Cardiac septum (tissue), 1 donor: ENCODE measurements at regions of chr3 and their contacts with region 1.

Region 1: GRCh38 chr3:130111185-130111864 is 29.7 kb downstream of the ALG1L2 start:
- DNase-seq: peak; percentile 100

Region 2: GRCh38 chr3:129530251-129530791 is 581.0 kb before region 1 on chr3:
- intact Hi-C with region 1: no loop called
- DNase-seq: no peak

Region 3: GRCh38 chr3:129942296-129942695 is 169.0 kb before region 1 on chr3:
- intact Hi-C with region 1: loop called (anchors 5 kb)
- DNase-seq: no peak